ENCODE measurements at regions of chr6 and their contacts with region 1.

Region 1: DNA sequence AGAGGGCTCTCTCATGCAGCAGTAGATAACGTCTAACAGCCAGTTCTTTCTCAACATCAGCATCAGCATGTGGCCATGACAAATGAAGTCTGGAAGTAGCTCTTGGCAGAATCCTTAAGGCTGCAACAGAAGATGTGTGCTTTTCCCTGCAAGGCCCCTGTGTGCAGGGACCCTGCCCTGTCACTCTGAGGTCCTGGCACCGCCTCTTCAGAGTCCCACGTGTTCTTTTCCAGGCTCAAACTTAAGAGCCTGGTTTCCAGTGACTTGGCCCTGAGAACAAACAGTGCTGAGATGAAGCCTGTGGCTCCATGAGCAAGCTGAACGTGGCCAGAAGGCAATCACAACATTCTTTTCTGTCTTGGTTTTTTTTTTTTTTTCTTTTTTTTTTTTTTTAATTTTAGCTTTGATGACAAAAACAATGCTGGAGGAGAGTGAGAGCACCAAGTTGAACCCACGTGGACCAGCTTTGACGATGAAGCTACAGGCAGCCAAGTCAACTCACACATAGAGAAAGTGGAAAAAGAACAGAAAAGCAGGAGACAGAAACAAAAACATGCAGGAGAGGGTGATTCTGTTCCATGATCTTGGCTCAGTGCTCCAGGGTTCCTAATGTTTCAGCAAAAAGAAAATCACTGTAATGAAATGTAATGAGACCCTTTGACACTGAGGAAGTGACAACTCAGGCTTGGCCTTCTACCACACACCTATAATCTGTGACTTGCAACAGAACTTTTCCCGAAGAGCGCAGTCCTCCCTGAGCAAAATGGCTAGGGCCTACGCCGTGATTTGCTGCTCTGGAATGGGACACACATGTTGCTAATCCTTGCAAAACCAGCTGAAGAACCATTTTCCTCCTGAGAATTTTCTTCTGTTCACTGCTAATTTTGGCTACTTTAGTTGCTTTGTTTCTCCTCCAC is 86.1 kb downstream of the FOXC1 start:
- DNase-seq: no peak
- H3K4me3 ChIP-seq: no peak overlapping the region
- H3K27ac ChIP-seq: no peak overlapping the region
- H3K4me1 ChIP-seq: peaks cover 0 to 4% (median 0%) of the 10 kb centered on the region in 4 experiments; a peak in 1 of 7 replicates
- H3K27me3 ChIP-seq: no peaks in the 10 kb centered on the region
- CTCF ChIP-seq: no peak
- EP300 ChIP-seq: no peak
- POLR2A ChIP-seq: no peak
- RAD21 ChIP-seq: no peak

Region 2: GRCh38 chr6:1709234-1709641 is 13.4 kb after region 1 on chr6:
- CTCF ChIA-PET with region 1: interaction called, 12 read pairs
- POLR2A ChIA-PET with region 1: no interaction called
- DNase-seq: no peak
- H3K4me3 ChIP-seq: no peak overlapping the region
- H3K27ac ChIP-seq: no peak overlapping the region
- H3K4me1 ChIP-seq: no peaks in the 10 kb centered on the region
- H3K27me3 ChIP-seq: no peaks in the 10 kb centered on the region; a peak in 1 of 7 replicates
- CTCF ChIP-seq: no peak
- EP300 ChIP-seq: no peak
- POLR2A ChIP-seq: no peak
- RAD21 ChIP-seq: no peak

Measured in H1 (cell line).